CD14-positive monocyte (primary cell): ENCODE measurements at regions of chr3 and their contacts with region 1.

Region 1: GRCh38 chr3:130093741-130094391 is 12.2 kb downstream of the ALG1L2 start:
- DNase-seq: peak; percentile 52 to 66 (median 55)
- H3K4me3 ChIP-seq: peak overlapping the region in 2 of 3 experiments; percentile 24 to 67
- H3K4me3 Mint-ChIP-seq: peak overlapping the region; percentile 59 to 81
- H3K27ac ChIP-seq: peak overlapping the region; percentile 9 to 36
- H3K27ac Mint-ChIP-seq: peak overlapping the region in 6 of 7 donors; percentile 19 to 78 (median 70)
- H3K4me1 ChIP-seq: peaks cover 30 to 33% of the 10 kb centered on the region in 2 donors
- H3K4me1 Mint-ChIP-seq: peaks cover 27% of the 10 kb centered on the region
- H3K27me3 ChIP-seq: no peaks in the 10 kb centered on the region
- H3K27me3 Mint-ChIP-seq: peaks cover 0 to 2% (median 1%) of the 10 kb centered on the region in 3 donors
- CTCF ChIP-seq: no peak

Region 2: DNA sequence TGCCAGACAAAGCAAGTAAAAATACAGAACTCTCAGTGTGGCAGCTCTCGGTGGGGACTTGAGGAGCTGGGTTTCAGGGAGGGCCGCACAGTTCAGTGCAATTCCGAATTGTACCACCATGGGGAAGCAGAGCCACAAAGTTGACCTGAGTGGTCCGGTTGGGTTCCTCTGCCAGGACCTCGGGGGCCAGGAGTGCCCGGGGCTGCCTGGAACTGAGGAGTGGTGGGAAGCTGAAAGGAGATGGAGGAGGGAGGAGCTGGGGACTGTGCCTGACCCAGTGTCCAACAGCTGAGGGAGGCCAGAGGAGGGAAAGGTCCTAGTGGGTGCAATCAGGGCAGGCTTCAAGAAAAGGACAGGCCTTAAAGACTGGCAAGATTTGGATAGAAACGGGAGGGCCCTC is 151.6 kb before region 1 on chr3:
- intact Hi-C with region 1: loop called in 1 of 2 experiments (anchors 1 kb)
- DNase-seq: peak; percentile 60 to 75 (median 71)
- H3K4me3 ChIP-seq: no peak overlapping the region
- H3K4me3 Mint-ChIP-seq: peak overlapping the region in 1 of 2 donors; percentile 7
- H3K27ac ChIP-seq: no peak overlapping the region
- H3K27ac Mint-ChIP-seq: peak overlapping the region in 1 of 7 donors; percentile 57
- H3K4me1 ChIP-seq: peaks cover 1 to 5% of the 10 kb centered on the region in 2 donors
- H3K4me1 Mint-ChIP-seq: peaks cover 7% of the 10 kb centered on the region
- H3K27me3 ChIP-seq: no peaks in the 10 kb centered on the region
- H3K27me3 Mint-ChIP-seq: peaks cover 3 to 5% (median 3%) of the 10 kb centered on the region in 3 donors
- CTCF ChIP-seq: peak; percentile 83

Region 3: GRCh38 chr3:130117933-130118332 is 24.1 kb after region 1 on chr3:
- intact Hi-C with region 1: no loop called
- DNase-seq: no peak
- H3K4me3 ChIP-seq: no peak overlapping the region
- H3K4me3 Mint-ChIP-seq: no peak overlapping the region
- H3K27ac ChIP-seq: no peak overlapping the region
- H3K27ac Mint-ChIP-seq: no peak overlapping the region
- H3K4me1 ChIP-seq: no peaks in the 10 kb centered on the region
- H3K4me1 Mint-ChIP-seq: peaks cover 3% of the 10 kb centered on the region
- H3K27me3 ChIP-seq: no peaks in the 10 kb centered on the region
- H3K27me3 Mint-ChIP-seq: peaks cover 1 to 15% (median 8%) of the 10 kb centered on the region in 3 donors
- CTCF ChIP-seq: no peak

Region 4: GRCh38 chr3:130414457-130414856 is 320.6 kb after region 1 on chr3:
- intact Hi-C with region 1: no loop called
- DNase-seq: peak; percentile 27 to 71 (median 30)
- H3K4me3 ChIP-seq: no peak overlapping the region
- H3K4me3 Mint-ChIP-seq: no peak overlapping the region
- H3K27ac ChIP-seq: no peak overlapping the region
- H3K27ac Mint-ChIP-seq: no peak overlapping the region
- H3K4me1 ChIP-seq: peaks cover 0 to 10% of the 10 kb centered on the region in 2 donors
- H3K4me1 Mint-ChIP-seq: peaks cover 5% of the 10 kb centered on the region
- H3K27me3 ChIP-seq: no peaks in the 10 kb centered on the region
- H3K27me3 Mint-ChIP-seq: peaks cover 2 to 6% (median 2%) of the 10 kb centered on the region in 3 donors
- CTCF ChIP-seq: no peak